ENCODE measurements at regions of chr6 and their contacts with region 1.

Region 1: GRCh38 chr6:113381959-113382358 is 475.2 kb upstream of the MARCKS start:
- DNase-seq: no peak
- ATAC-seq: no peak
- H3K4me3 ChIP-seq: no peak overlapping the region
- H3K27ac ChIP-seq: no peak overlapping the region
- H3K4me1 ChIP-seq: no peaks in the 10 kb centered on the region
- H3K27me3 ChIP-seq: no peaks in the 10 kb centered on the region
- CTCF ChIP-seq: no peak

Region 2: DNA sequence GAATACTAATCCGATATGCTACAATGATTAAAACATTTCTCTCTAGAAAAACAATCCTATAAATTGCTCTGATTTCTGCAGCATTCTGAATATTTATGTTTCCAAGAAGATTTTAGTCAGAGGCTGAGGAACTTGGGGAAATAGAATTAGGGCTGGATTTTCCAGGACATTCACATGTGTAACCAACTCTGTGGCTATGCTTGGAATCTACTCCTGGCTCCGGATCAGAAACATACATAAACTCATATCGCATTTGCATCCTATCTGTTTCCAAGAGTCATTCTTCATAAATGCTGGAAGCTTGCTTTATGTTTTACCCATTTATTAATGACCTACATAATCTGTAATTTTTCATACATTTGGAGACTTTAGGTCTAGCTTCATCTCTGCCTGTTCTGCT is 15.3 kb after region 1 on chr6:
- CTCF ChIA-PET with region 1: no interaction called
- POLR2A ChIA-PET with region 1: no interaction called
- in situ Hi-C with region 1: no loop called
- intact Hi-C with region 1: no loop called
- DNase-seq: no peak
- ATAC-seq: no peak
- H3K4me3 ChIP-seq: no peak overlapping the region
- H3K27ac ChIP-seq: no peak overlapping the region
- H3K4me1 ChIP-seq: no peaks in the 10 kb centered on the region
- H3K27me3 ChIP-seq: no peaks in the 10 kb centered on the region
- CTCF ChIP-seq: no peak

Region 3: DNA sequence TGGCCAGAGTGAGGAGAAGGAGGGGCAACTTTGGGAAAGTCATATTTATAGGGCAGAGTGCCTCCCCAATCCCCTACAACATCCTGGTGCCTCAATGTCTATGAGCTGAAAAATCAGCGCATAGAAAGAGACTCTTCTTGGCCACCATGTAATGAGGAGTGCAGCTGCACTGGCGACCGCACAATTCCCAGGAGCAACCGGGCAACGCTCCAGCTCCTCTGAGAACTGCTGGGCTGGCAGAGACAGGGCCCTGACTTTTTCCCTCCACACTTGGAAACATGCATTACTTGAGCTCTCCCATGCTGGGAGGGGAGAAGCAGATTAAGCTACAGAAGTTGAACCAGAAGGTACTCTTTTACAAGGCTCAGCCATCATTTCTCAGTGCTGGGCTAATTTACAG is 443.8 kb after region 1 on chr6:
- CTCF ChIA-PET with region 1: interaction called, 10 read pairs
- POLR2A ChIA-PET with region 1: no interaction called
- in situ Hi-C with region 1: no loop called
- intact Hi-C with region 1: no loop called
- DNase-seq: no peak
- ATAC-seq: no peak
- H3K4me3 ChIP-seq: no peak overlapping the region
- H3K27ac ChIP-seq: no peak overlapping the region
- H3K4me1 ChIP-seq: no peaks in the 10 kb centered on the region
- H3K27me3 ChIP-seq: peaks cover 6% of the 10 kb centered on the region
- CTCF ChIP-seq: no peak